CD4-positive, alpha-beta memory T cell (primary cell): ENCODE measurements at regions of chr1 and their contacts with region 1.

Region 1: GRCh38 chr1:231357831-231358354 is 19.8 kb downstream of the SPRTN start:
- DNase-seq: peak; percentile 53 to 62 (median 58)
- H3K4me3 ChIP-seq: no peak overlapping the region
- H3K4me3 Mint-ChIP-seq: no peak overlapping the region
- H3K27ac ChIP-seq: no peak overlapping the region
- H3K27ac Mint-ChIP-seq: peak overlapping the region in 5 of 7 donors; percentile 20 to 65 (median 29)
- H3K4me1 ChIP-seq: peaks cover 5% of the 10 kb centered on the region
- H3K4me1 Mint-ChIP-seq: peaks cover 5 to 9% (median 9%) of the 10 kb centered on the region in 4 donors
- H3K27me3 ChIP-seq: no peaks in the 10 kb centered on the region
- H3K27me3 Mint-ChIP-seq: no peaks in the 10 kb centered on the region

Region 2: GRCh38 chr1:231211005-231211857 is 146.7 kb before region 1 on chr1:
- CTCF ChIA-PET with region 1: no interaction called
- POLR2A ChIA-PET with region 1: no interaction called
- intact Hi-C with region 1: no loop called
- DNase-seq: peak; percentile 79 to 87 (median 82)
- H3K4me3 ChIP-seq: peak overlapping the region in 1 of 2 donors; percentile 27
- H3K4me3 Mint-ChIP-seq: peak overlapping the region; percentile 87 to 95 (median 92)
- H3K27ac ChIP-seq: no peak overlapping the region
- H3K27ac Mint-ChIP-seq: peak overlapping the region in 5 of 7 donors; percentile 41 to 90 (median 84)
- H3K4me1 ChIP-seq: peaks cover 10% of the 10 kb centered on the region
- H3K4me1 Mint-ChIP-seq: peaks cover 4 to 10% (median 7%) of the 10 kb centered on the region in 4 donors
- H3K27me3 ChIP-seq: no peaks in the 10 kb centered on the region
- H3K27me3 Mint-ChIP-seq: peaks cover 0 to 3% of the 10 kb centered on the region in 2 donors

Region 3: GRCh38 chr1:231266811-231267322 is 91.0 kb before region 1 on chr1:
- CTCF ChIA-PET with region 1: no interaction called
- POLR2A ChIA-PET with region 1: no interaction called
- intact Hi-C with region 1: no loop called
- DNase-seq: no peak
- H3K4me3 ChIP-seq: no peak overlapping the region
- H3K4me3 Mint-ChIP-seq: no peak overlapping the region
- H3K27ac ChIP-seq: no peak overlapping the region
- H3K27ac Mint-ChIP-seq: no peak overlapping the region
- H3K4me1 ChIP-seq: no peaks in the 10 kb centered on the region
- H3K4me1 Mint-ChIP-seq: peaks cover 0 to 2% (median 0%) of the 10 kb centered on the region in 4 donors
- H3K27me3 ChIP-seq: no peaks in the 10 kb centered on the region
- H3K27me3 Mint-ChIP-seq: no peaks in the 10 kb centered on the region

Region 4: GRCh38 chr1:231515748-231516147 is 157.9 kb after region 1 on chr1:
- CTCF ChIA-PET with region 1: no interaction called
- POLR2A ChIA-PET with region 1: no interaction called
- intact Hi-C with region 1: no loop called
- DNase-seq: no peak
- H3K4me3 ChIP-seq: no peak overlapping the region
- H3K4me3 Mint-ChIP-seq: no peak overlapping the region
- H3K27ac ChIP-seq: no peak overlapping the region
- H3K27ac Mint-ChIP-seq: no peak overlapping the region
- H3K4me1 ChIP-seq: no peaks in the 10 kb centered on the region
- H3K4me1 Mint-ChIP-seq: no peaks in the 10 kb centered on the region
- H3K27me3 ChIP-seq: no peaks in the 10 kb centered on the region
- H3K27me3 Mint-ChIP-seq: peaks cover 9 to 20% of the 10 kb centered on the region in 2 donors

Region 5: DNA sequence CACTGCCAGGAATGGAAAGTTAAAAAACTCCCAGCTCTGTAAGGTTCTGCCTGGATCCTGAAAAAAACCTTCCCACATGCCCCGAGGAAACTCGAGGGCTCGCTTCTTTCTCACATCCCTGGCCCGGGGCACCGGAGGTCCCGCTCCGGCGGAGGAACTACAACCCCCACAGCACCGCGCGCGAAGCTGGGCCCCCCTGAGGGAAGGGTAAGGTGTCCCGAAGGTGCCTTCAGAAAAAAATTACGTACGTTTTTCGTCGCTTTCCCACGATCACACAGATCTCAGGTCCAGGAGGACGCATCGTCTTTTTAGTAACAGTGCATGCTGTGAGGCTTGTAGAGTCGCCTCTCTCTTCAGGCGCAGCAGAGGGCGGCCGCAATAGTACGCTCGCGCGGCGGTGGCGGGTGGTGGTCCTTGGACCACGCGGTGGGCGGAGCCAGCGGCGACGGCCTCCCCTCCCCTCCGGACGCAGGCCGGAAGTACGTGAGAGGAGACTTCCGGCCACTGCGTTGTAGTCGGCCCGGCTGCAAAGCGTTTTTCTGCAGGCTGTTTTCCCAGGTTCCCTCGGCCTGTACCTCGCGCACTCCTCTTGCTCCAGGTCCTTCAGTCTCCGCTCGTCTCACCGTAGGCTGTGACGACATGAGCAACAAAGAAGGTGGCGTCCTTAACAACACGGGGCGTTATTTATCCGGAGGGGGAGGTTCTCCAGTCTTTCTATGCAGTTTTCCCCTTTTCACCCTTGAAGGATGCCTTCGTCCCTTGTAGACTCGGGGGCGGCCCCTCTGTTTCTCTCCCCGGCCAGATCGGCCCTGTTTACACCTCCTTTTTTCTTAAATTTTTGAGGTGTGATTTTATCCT is 170.5 kb after region 1 on chr1 and contains the start of gene TSNAX:
- CTCF ChIA-PET with region 1: interaction called, 5 read pairs
- POLR2A ChIA-PET with region 1: no interaction called
- intact Hi-C with region 1: loop called (anchors 5 kb)
- DNase-seq: peak; percentile 87 to 94 (median 93)
- H3K4me3 ChIP-seq: peak within 1 kb of the TSS; percentile 59 to 86
- H3K4me3 Mint-ChIP-seq: peak within 1 kb of the TSS; percentile 96 to 98 (median 98)
- H3K27ac ChIP-seq: peak within 1 kb of the TSS; percentile 82
- H3K27ac Mint-ChIP-seq: peak within 1 kb of the TSS; percentile 99 to 100 (median 100)
- H3K4me1 ChIP-seq: peaks cover 52% of the 10 kb centered on the region
- H3K4me1 Mint-ChIP-seq: peaks cover 19 to 52% (median 36%) of the 10 kb centered on the region in 4 donors
- H3K27me3 ChIP-seq: no peaks in the 10 kb centered on the region
- H3K27me3 Mint-ChIP-seq: no peaks in the 10 kb centered on the region
- total RNA-seq, gene TSNAX: 43.5 to 50.7 TPM

Region 6: GRCh38 chr1:231550448-231550781 is 192.5 kb after region 1 on chr1:
- CTCF ChIA-PET with region 1: interaction called, 5 read pairs
- POLR2A ChIA-PET with region 1: no interaction called
- intact Hi-C with region 1: loop called (anchors 1 kb)
- DNase-seq: peak; percentile 15 to 42 (median 26)
- H3K4me3 ChIP-seq: no peak overlapping the region
- H3K4me3 Mint-ChIP-seq: no peak overlapping the region
- H3K27ac ChIP-seq: no peak overlapping the region
- H3K27ac Mint-ChIP-seq: peak overlapping the region in 1 of 7 donors; percentile 6
- H3K4me1 ChIP-seq: peaks cover 4% of the 10 kb centered on the region
- H3K4me1 Mint-ChIP-seq: peaks cover 13 to 35% (median 26%) of the 10 kb centered on the region in 4 donors
- H3K27me3 ChIP-seq: no peaks in the 10 kb centered on the region
- H3K27me3 Mint-ChIP-seq: no peaks in the 10 kb centered on the region

Region 7: GRCh38 chr1:231590453-231591198 is 232.7 kb after region 1 on chr1:
- CTCF ChIA-PET with region 1: interaction called, 48 read pairs
- POLR2A ChIA-PET with region 1: no interaction called
- intact Hi-C with region 1: loop called (anchors 1 kb)
- DNase-seq: peak; percentile 25 to 50 (median 33)
- H3K4me3 ChIP-seq: no peak overlapping the region
- H3K4me3 Mint-ChIP-seq: no peak overlapping the region
- H3K27ac ChIP-seq: no peak overlapping the region
- H3K27ac Mint-ChIP-seq: no peak overlapping the region
- H3K4me1 ChIP-seq: no peaks in the 10 kb centered on the region
- H3K4me1 Mint-ChIP-seq: peaks cover 0 to 6% (median 3%) of the 10 kb centered on the region in 4 donors
- H3K27me3 ChIP-seq: no peaks in the 10 kb centered on the region
- H3K27me3 Mint-ChIP-seq: no peaks in the 10 kb centered on the region

Region 8: GRCh38 chr1:231603598-231604275 is 245.8 kb after region 1 on chr1:
- CTCF ChIA-PET with region 1: interaction called, 146 read pairs
- POLR2A ChIA-PET with region 1: no interaction called
- intact Hi-C with region 1: loop called (anchors 1 kb)
- DNase-seq: peak in 4 of 5 donors; percentile 60 to 67 (median 63)
- H3K4me3 ChIP-seq: peak overlapping the region; percentile 63 to 74
- H3K4me3 Mint-ChIP-seq: peak overlapping the region; percentile 89 to 97 (median 94)
- H3K27ac ChIP-seq: peak overlapping the region; percentile 48
- H3K27ac Mint-ChIP-seq: peak overlapping the region; percentile 70 to 92 (median 89)
- H3K4me1 ChIP-seq: no peaks in the 10 kb centered on the region
- H3K4me1 Mint-ChIP-seq: peaks cover 7 to 8% (median 8%) of the 10 kb centered on the region in 4 donors
- H3K27me3 ChIP-seq: no peaks in the 10 kb centered on the region
- H3K27me3 Mint-ChIP-seq: no peaks in the 10 kb centered on the region

Region 9: DNA sequence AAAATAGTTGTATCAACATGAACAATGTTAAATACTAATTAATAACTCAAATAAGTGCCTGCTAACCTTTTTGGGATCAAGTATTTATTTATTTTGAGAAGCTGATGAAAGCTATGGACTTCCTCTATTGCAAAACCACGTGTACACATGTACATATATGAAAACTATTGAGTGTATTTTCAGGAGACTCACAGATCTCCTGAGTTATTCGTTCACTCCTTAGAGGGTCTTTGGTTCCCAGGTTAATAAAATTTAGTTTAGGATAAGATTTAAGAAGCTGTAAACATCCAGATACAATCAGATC is 399.2 kb after region 1 on chr1:
- CTCF ChIA-PET with region 1: interaction called, 3 read pairs
- POLR2A ChIA-PET with region 1: no interaction called
- intact Hi-C with region 1: loop called (anchors 5 kb)
- DNase-seq: no peak
- H3K4me3 ChIP-seq: no peak overlapping the region
- H3K4me3 Mint-ChIP-seq: no peak overlapping the region
- H3K27ac ChIP-seq: no peak overlapping the region
- H3K27ac Mint-ChIP-seq: no peak overlapping the region
- H3K4me1 ChIP-seq: no peaks in the 10 kb centered on the region
- H3K4me1 Mint-ChIP-seq: peaks cover 0 to 4% (median 0%) of the 10 kb centered on the region in 4 donors
- H3K27me3 ChIP-seq: no peaks in the 10 kb centered on the region
- H3K27me3 Mint-ChIP-seq: no peaks in the 10 kb centered on the region